Dorsolateral prefrontal cortex (tissue), 120 donors: ENCODE measurements at regions of chr10 and their contacts with region 1.

Region 1: GRCh38 chr10:68331455-68332258 is at the start of gene HNRNPH3:
- DNase-seq: peak; percentile 93 to 98 (median 96)
- H3K4me3 ChIP-seq: peak within 1 kb of the TSS; percentile 64 to 99 (median 90)
- H3K27ac ChIP-seq: peak within 1 kb of the TSS; percentile 91 to 100 (median 99)
- H3K27me3 ChIP-seq: no peaks in the 10 kb centered on the region
- CTCF ChIP-seq: peak in 10 of 56 donors; percentile 2 to 28 (median 10)
- total RNA-seq, gene HNRNPH3: 77.7 to 201 (median 131) TPM

Region 2: DNA sequence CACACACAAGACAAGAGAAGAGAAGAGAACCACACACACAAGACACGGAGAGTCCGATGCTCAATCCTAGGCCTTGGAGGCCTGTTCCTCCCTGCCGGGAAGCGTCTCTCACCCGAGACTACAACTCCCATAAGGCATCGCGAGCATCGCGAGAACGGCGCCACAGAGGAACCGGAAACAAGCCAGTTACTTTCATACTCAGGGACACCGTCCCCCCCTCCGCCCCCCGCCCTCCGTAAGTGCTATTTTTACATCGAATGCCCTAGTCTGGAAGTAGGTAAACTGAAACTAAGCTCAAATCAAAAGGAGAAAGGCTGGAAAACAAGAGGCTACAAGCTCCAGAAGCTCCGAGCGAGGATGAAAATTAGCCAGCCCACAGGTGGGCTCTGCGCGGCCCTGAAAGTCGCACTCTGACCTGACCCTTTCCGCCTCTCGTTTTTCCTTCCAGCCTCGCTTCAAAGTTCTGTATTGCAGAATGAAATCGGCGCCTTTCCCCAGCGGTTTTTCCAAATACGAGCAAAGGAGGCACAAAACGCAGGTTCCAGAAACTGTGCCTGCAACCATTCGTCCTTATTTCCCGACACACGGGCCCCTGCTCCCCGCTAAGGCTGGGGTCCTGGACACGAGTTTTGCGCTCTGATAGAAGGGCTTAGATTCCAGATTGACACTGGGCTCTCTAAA is 482.2 kb before region 1 on chr10:
- intact Hi-C with region 1: loop called in 1 of 2 experiments (anchors 10 kb)
- DNase-seq: peak; percentile 93 to 98 (median 96)
- H3K4me3 ChIP-seq: peak overlapping the region; percentile 58 to 98 (median 83)
- H3K27ac ChIP-seq: peak overlapping the region; percentile 61 to 99 (median 94)
- H3K27me3 ChIP-seq: no peaks in the 10 kb centered on the region
- CTCF ChIP-seq: peak in 28 of 56 donors; percentile 3 to 44 (median 22)

Region 3: DNA sequence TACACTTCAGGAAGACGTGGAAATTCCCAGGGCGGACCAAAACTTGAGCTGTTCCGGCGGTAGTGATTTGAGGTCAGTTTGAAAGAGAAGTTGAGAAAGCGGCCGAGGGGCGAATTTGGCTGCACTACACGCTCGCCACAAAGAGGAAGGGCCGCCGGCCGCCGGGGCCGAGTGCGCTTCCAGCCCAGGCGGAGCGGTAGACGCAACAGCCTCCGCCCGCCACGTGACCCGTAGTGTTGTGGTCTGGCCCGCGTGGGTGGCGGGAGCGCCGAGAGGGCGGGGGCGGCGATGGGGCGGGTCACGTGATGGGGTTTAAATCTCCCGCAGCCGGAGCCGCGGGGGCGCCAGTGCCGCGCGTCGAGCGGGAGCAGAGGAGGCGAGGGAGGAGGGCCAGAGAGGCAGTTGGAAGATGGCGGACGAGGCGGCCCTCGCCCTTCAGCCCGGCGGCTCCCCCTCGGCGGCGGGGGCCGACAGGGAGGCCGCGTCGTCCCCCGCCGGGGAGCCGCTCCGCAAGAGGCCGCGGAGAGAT is 447.3 kb before region 1 on chr10 and contains the start of gene SIRT1:
- intact Hi-C with region 1: loop called (anchors 5 to 10 kb)
- DNase-seq: peak; percentile 94 to 98 (median 96)
- H3K4me3 ChIP-seq: peak within 1 kb of the TSS; percentile 63 to 94 (median 85)
- H3K27ac ChIP-seq: peak within 1 kb of the TSS; percentile 11 to 98 (median 95)
- H3K27me3 ChIP-seq: no peaks in the 10 kb centered on the region
- CTCF ChIP-seq: peak in 38 of 56 donors; percentile 6 to 68 (median 32)
- total RNA-seq, gene SIRT1: 14.8 to 41.9 (median 25.2) TPM

Region 4: DNA sequence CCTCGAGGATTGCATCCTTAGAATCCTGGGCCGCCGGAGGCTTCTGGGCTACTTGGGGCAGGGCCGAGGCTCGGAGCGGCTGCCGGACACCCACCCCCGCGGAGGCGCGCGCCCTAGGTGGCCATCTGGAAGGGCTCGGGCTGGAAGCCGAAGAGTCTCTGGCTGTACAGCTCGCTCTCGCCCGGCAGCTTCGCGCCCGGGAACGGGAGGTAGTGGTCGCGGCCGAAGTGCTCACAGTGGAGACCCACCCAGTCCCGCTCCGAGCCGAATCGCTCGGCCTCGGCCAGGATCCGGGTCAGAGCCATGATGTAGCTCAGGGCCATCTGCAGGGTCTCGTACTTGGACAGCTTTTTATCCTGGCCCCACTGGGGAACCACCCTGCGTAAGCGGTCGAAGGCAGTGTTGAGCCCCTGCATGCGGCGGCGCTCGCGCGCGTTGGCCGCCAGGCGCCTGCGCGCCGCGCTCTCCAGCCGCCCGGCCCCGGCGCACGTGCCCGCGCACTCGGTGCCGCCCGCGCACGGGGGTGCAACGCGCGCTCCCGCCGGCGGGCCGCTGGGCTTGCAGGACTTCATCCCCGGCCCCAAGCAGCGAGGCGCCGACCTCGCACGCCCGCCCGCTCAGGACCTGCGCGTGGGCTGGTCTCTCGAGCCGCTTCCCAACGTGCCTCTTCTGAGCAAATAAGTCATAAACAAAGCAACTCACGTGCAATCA is 100.4 kb before region 1 on chr10:
- intact Hi-C with region 1: loop called (anchors 1 to 5 kb)
- DNase-seq: peak; percentile 58 to 86 (median 70)
- H3K4me3 ChIP-seq: peak overlapping the region; percentile 54 to 91 (median 77)
- H3K27ac ChIP-seq: peak overlapping the region; percentile 50 to 94 (median 87)
- H3K27me3 ChIP-seq: no peaks in the 10 kb centered on the region
- CTCF ChIP-seq: peak in 40 of 56 donors; percentile 12 to 61 (median 36)

Region 5: GRCh38 chr10:68406815-68407548 is 75.3 kb after region 1 on chr10 and contains the start of gene RUFY2:
- intact Hi-C with region 1: loop called (anchors 2 kb)
- DNase-seq: peak; percentile 60 to 88 (median 76)
- H3K4me3 ChIP-seq: peak within 1 kb of the TSS; percentile 67 to 99 (median 95)
- H3K27ac ChIP-seq: peak within 1 kb of the TSS; percentile 77 to 99 (median 97)
- H3K27me3 ChIP-seq: no peaks in the 10 kb centered on the region
- CTCF ChIP-seq: peak in 53 of 56 donors; percentile 5 to 97 (median 62)
- total RNA-seq, gene RUFY2: 64.5 to 128 (median 91.0) TPM

Region 6: GRCh38 chr10:68526626-68527307 is 195.1 kb after region 1 on chr10:
- intact Hi-C with region 1: loop called in 1 of 2 experiments (anchors 10 kb)
- DNase-seq: no peak
- H3K4me3 ChIP-seq: peak overlapping the region; percentile 79 to 100 (median 96)
- H3K27ac ChIP-seq: peak overlapping the region; percentile 63 to 97 (median 91)
- H3K27me3 ChIP-seq: no peaks in the 10 kb centered on the region
- CTCF ChIP-seq: no peak